ENCODE measurements at regions of chr1 and their contacts with region 1.

Region 1: DNA sequence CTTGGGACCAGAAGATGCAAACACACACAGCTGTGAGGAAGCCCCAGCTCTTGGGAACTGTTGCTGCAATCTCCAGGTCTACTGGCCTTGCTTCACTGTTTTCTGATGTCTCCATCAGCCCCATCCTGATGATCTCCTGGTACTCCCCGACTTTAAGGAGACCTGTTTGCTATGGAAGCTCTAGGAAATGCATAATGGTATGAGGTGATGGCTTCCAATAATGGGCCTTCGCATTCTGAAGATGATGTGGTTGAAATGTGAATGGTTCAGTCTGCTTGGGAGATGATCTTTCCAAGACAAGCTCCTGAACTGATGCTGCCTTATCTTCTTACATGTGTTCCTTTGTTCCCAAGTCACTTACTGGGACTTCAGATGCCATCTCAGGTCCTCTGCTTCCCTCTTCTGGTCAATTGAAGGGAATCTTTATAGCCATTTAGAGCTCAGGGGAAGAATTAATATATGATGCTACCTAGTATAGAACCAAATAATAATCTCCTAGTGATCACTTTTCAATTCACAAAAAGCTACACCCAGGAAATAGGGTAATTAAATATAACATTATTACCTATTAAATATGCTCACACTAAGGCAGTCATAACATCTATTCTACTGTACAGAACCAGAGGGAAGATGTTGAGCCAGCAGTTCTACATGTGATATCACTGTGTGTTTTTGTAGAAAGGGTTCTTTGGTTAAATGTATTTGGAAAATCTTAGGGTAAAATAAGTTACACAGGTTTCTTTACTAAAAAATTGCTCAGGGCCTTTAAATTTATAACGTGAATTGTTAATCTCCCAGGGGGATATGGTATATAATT is 73.9 kb upstream of the VTCN1 start:
- DNase-seq: peak; percentile 24
- H3K4me3 ChIP-seq: no peak overlapping the region
- H3K27ac ChIP-seq: no peak overlapping the region
- H3K4me1 ChIP-seq: no peaks in the 10 kb centered on the region
- H3K27me3 ChIP-seq: no peaks in the 10 kb centered on the region
- CTCF ChIP-seq: peak; percentile 40 to 85 (median 68)
- POLR2A ChIP-seq: no peak

Region 2: DNA sequence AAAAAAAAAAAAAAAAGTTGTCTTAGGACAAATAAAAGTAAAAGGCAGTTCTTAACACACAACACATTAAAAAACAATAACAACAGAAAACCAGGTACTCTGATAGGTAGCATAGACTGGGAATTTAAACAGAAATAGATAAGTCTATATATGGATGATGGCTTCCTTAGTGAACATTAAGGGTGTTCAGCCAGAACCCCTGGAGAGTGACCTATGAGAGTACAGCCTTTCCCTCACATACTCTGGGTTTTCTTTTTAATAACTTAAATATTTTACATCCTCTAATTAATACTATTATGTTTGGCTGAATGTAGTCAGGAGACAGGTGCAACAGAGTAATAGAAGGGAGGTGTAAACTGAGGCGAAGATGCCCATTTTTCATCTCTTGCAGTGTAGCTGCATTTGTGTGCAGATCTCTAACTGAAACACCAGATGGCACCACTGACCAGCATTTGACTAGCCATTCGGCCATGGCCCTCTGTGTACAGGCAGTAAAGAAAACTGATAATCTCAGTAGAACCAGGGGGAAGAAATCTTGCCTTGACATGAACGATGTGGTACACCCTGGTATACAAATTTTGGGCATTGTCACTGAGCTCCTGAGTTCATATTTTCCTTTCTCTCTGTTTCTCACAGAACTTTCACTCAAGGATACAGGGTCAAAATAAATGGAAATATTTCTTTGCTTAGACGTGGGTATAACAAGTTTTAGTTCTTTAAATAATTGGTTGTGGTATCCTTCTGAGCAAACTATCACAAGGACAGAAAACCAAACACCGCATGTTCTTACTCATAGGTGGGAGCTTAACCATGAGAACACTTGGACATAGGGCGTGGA is 216.9 kb before region 1 on chr1:
- intact Hi-C with region 1: loop called (anchors 2 kb)
- DNase-seq: peak; percentile 34
- H3K4me3 ChIP-seq: no peak overlapping the region
- H3K27ac ChIP-seq: no peak overlapping the region
- H3K4me1 ChIP-seq: no peaks in the 10 kb centered on the region
- H3K27me3 ChIP-seq: no peaks in the 10 kb centered on the region
- CTCF ChIP-seq: peak; percentile 68 to 86 (median 78)
- POLR2A ChIP-seq: no peak